Dendritic cell treated with granulocyte-macrophage colony-stimulating factor and Interleukin-4, amounts not matched to agents 40 ng/mL and 50 ng/mL, for 4 days (primary cell): ENCODE measurements at regions of chr19 and their contacts with region 1.

Region 1: DNA sequence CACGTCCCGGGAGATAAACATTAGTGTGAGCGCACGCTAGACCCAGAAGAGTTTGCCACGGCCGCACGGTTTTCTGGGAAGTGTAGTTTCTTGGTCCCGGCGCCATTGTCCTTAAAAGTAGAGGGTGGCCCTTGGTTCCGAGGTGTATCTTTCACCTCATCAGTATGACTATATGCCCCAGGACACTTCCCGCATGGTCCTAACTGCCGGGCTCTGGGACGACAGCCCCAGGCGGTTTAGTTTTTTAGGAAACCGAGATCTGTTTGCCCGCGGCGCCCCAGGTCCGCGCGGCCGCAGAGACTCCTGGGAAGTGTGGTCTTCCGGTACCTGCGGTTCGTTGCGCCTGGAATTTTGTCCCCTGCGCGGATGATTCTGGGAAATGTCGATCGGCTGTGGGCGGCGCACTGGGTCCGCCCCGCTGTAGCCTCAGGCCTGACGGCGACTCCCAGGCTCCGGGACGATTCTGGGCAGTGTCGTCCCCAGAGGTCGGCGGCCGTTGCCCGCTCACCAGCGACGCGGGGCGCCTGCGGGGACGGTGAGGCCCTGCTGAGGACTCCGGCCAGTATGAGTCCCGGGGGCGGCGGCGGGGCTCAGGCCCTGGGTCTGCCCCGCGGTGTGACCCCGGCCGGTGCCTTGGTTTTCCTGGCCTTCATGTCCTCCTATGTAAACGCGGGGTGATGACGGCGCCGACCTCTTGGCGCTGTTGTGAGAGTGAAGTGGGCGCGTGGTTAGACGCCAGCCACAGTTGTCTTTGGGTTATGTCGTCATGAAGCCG is at the start of gene ZNF181:
- H3K4me3 Mint-ChIP-seq: peak within 1 kb of the TSS; percentile 88
- H3K27ac Mint-ChIP-seq: peak within 1 kb of the TSS; percentile 99
- H3K4me1 Mint-ChIP-seq: peaks cover 22% of the 10 kb centered on the region
- H3K27me3 Mint-ChIP-seq: peaks cover 9% of the 10 kb centered on the region

Region 2: GRCh38 chr19:34677386-34678084 is 56.5 kb before region 1 on chr19 and contains the start of gene ZNF302:
- intact Hi-C with region 1: loop called (anchors 1 kb)
- H3K4me3 Mint-ChIP-seq: peak within 1 kb of the TSS; percentile 92
- H3K27ac Mint-ChIP-seq: peak within 1 kb of the TSS; percentile 100
- H3K4me1 Mint-ChIP-seq: peaks cover 12% of the 10 kb centered on the region
- H3K27me3 Mint-ChIP-seq: peaks cover 29% of the 10 kb centered on the region

Region 3: DNA sequence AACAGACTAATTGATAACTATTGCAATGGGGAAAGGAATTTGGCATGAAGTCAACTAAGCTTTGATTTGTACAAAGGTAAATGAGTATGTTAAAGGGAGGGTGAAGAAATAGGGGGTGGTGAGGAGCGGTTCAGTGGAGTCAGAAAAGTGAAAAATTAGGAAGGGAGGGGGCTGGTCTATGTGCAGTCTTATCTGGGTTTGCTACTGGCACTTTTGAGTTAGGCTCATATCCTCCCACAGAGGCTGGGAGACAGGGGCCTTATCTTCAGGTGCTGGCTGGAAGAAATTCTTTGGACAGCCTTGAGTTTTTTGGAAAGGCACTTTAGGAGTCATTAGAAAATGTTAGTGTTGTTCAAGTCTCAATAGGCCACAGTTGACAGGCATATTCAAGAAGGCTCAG is 45.4 kb before region 1 on chr19:
- intact Hi-C with region 1: no loop called
- H3K4me3 Mint-ChIP-seq: no peak overlapping the region
- H3K27ac Mint-ChIP-seq: no peak overlapping the region
- H3K4me1 Mint-ChIP-seq: no peaks in the 10 kb centered on the region
- H3K27me3 Mint-ChIP-seq: peaks cover 9% of the 10 kb centered on the region

Region 4: DNA sequence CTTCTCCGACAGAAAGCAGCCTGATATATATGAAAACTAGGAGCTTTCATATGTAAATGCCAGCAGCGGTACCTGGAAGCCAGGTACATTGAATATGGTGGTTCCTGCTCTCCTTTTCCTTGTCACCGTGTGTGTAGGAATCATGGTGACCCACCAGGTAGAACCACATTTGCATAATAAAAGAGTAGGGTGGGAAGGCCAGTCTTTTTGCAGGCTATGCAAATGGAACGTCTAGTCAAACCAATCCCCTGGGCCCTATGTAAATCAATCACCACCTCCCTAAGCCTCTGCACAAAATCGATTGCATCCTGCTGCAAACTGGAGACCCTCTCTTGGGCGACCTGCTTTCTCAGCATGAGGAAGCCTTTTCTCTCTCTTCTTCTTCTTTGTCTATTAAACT is 22.1 kb before region 1 on chr19:
- intact Hi-C with region 1: no loop called
- H3K4me3 Mint-ChIP-seq: no peak overlapping the region
- H3K27ac Mint-ChIP-seq: no peak overlapping the region
- H3K4me1 Mint-ChIP-seq: no peaks in the 10 kb centered on the region
- H3K27me3 Mint-ChIP-seq: peaks cover 6% of the 10 kb centered on the region

Region 5: GRCh38 chr19:34722353-34722752 is 11.7 kb before region 1 on chr19:
- intact Hi-C with region 1: no loop called
- H3K4me3 Mint-ChIP-seq: no peak overlapping the region
- H3K27ac Mint-ChIP-seq: no peak overlapping the region
- H3K4me1 Mint-ChIP-seq: no peaks in the 10 kb centered on the region
- H3K27me3 Mint-ChIP-seq: peaks cover 24% of the 10 kb centered on the region

Region 6: DNA sequence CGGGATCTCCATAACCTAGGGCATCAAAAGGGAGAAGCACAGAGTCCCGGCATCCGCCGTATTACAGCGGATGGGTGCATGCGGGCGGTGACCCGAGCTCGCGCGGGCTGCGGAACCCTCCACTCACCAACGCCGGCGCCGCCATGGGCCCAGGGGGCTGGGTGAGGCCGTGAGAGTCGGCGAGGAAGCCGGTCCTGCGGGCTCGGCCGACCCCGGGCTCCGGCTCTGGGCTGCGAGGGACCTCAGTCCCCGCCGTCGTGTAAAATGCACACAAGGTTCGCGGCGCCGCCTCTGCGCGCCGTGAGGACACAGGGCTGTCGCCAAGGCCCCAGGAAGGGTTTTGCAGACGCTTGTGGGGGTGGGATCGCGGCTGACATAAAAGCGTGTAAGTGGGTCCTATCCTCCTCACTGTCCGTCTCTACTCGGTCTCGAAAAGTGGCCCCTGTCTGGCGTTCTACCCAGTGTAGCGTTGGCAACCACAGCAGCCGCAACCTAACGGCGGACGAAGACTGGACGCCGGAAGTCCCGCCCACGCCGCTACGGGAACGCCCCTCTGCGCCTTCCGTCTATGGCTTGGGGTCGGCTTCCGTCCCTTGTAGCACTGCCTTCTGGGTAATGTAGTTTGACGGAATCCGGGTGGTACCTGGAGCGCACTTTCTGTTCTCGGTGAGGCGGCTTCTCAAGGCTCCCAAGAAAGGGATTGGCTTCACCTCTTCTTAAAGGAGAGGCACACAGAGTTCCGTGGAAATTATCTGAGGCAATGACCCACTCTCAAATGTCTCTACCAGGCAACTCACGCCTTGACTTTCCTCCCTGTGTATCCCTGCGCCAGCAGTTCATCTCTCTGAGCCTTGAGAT is 38.9 kb after region 1 on chr19 and contains the start of gene ZNF599:
- intact Hi-C with region 1: loop called (anchors 1 kb)
- H3K4me3 Mint-ChIP-seq: peak within 1 kb of the TSS; percentile 75
- H3K27ac Mint-ChIP-seq: peak within 1 kb of the TSS; percentile 74
- H3K4me1 Mint-ChIP-seq: peaks cover 10% of the 10 kb centered on the region
- H3K27me3 Mint-ChIP-seq: peaks cover 12% of the 10 kb centered on the region